CD4-positive, alpha-beta memory T cell (primary cell): ENCODE measurements at regions of chr2 and their contacts with region 1.

Region 1: DNA sequence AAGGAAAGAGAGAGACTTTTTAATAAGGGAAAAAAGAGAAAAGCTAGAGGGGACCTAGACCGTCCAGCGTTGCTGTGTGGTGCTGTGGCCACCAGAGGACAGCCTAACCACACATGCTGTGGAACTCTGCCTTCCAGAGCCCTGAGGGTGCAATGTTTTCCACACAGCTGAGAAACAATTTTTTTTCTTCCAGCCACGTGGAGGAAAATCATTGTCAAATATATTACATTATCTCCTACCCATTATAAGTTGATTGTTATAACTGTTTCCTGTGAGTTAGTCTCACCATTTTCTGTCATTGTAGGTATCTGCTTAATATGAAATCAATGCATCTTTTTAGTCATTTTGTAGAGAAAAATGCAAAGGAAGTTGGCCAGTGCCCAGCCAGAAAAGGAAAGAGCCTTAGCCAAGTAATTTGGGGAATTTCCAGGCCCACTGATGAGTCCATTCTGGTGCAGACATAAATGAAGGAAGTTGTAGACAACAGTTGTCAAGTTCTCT is 5.9 kb upstream of the MRPL19 start:
- DNase-seq: peak in 4 of 5 donors; percentile 15 to 34 (median 28)
- H3K4me3 ChIP-seq: no peak overlapping the region
- H3K4me3 Mint-ChIP-seq: no peak overlapping the region
- H3K27ac ChIP-seq: no peak overlapping the region
- H3K27ac Mint-ChIP-seq: no peak overlapping the region
- H3K4me1 ChIP-seq: no peaks in the 10 kb centered on the region
- H3K4me1 Mint-ChIP-seq: peaks cover 0 to 2% (median 0%) of the 10 kb centered on the region in 4 donors
- H3K27me3 ChIP-seq: no peaks in the 10 kb centered on the region
- H3K27me3 Mint-ChIP-seq: peaks cover 14 to 16% of the 10 kb centered on the region in 2 donors

Region 2: GRCh38 chr2:75615741-75616140 is 24.9 kb before region 1 on chr2:
- CTCF ChIA-PET with region 1: no interaction called
- POLR2A ChIA-PET with region 1: no interaction called
- intact Hi-C with region 1: no loop called
- DNase-seq: no peak
- H3K4me3 ChIP-seq: no peak overlapping the region
- H3K4me3 Mint-ChIP-seq: no peak overlapping the region
- H3K27ac ChIP-seq: no peak overlapping the region
- H3K27ac Mint-ChIP-seq: no peak overlapping the region
- H3K4me1 ChIP-seq: no peaks in the 10 kb centered on the region
- H3K4me1 Mint-ChIP-seq: no peaks in the 10 kb centered on the region
- H3K27me3 ChIP-seq: no peaks in the 10 kb centered on the region
- H3K27me3 Mint-ChIP-seq: peaks cover 23 to 28% of the 10 kb centered on the region in 2 donors

Region 3: GRCh38 chr2:75627895-75628504 is 12.7 kb before region 1 on chr2:
- CTCF ChIA-PET with region 1: interaction called, 25 read pairs
- POLR2A ChIA-PET with region 1: no interaction called
- intact Hi-C with region 1: no loop called
- DNase-seq: peak; percentile 24 to 50 (median 29)
- H3K4me3 ChIP-seq: no peak overlapping the region
- H3K4me3 Mint-ChIP-seq: no peak overlapping the region
- H3K27ac ChIP-seq: no peak overlapping the region
- H3K27ac Mint-ChIP-seq: no peak overlapping the region
- H3K4me1 ChIP-seq: no peaks in the 10 kb centered on the region
- H3K4me1 Mint-ChIP-seq: peaks cover 0 to 4% (median 0%) of the 10 kb centered on the region in 4 donors
- H3K27me3 ChIP-seq: no peaks in the 10 kb centered on the region
- H3K27me3 Mint-ChIP-seq: peaks cover 16 to 28% of the 10 kb centered on the region in 2 donors

Region 4: GRCh38 chr2:75654012-75654411 is 13.3 kb after region 1 on chr2:
- CTCF ChIA-PET with region 1: interaction called, 12 read pairs
- POLR2A ChIA-PET with region 1: no interaction called
- intact Hi-C with region 1: no loop called
- DNase-seq: no peak
- H3K4me3 ChIP-seq: no peak overlapping the region
- H3K4me3 Mint-ChIP-seq: no peak overlapping the region
- H3K27ac ChIP-seq: no peak overlapping the region
- H3K27ac Mint-ChIP-seq: no peak overlapping the region
- H3K4me1 ChIP-seq: no peaks in the 10 kb centered on the region
- H3K4me1 Mint-ChIP-seq: peaks cover 21 to 35% (median 23%) of the 10 kb centered on the region in 4 donors
- H3K27me3 ChIP-seq: no peaks in the 10 kb centered on the region
- H3K27me3 Mint-ChIP-seq: no peaks in the 10 kb centered on the region

Region 5: DNA sequence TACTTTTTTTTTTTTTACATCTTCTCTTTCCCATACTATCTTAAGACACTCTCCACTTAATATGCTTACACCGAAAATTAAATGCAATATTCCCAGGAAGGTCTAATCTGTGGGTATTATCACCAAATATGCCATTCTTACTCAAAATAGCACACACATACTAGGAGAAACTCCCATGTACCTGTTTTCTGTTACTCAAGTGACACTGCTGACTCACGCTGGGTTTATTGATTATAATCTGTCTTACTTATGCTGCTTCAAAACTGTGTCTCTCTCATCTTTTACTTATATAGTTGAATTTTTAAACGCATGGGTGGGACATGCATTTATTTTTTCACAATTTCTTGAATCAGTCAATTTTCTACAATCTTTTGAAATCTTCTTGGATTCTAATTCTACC is 35.8 kb after region 1 on chr2:
- CTCF ChIA-PET with region 1: interaction called, 59 read pairs
- POLR2A ChIA-PET with region 1: no interaction called
- intact Hi-C with region 1: loop called (anchors 1 kb)
- DNase-seq: no peak
- H3K4me3 ChIP-seq: no peak overlapping the region
- H3K4me3 Mint-ChIP-seq: no peak overlapping the region
- H3K27ac ChIP-seq: no peak overlapping the region
- H3K27ac Mint-ChIP-seq: no peak overlapping the region
- H3K4me1 ChIP-seq: no peaks in the 10 kb centered on the region
- H3K4me1 Mint-ChIP-seq: peaks cover 0 to 11% (median 5%) of the 10 kb centered on the region in 4 donors
- H3K27me3 ChIP-seq: no peaks in the 10 kb centered on the region
- H3K27me3 Mint-ChIP-seq: no peaks in the 10 kb centered on the region